ENCODE measurements at regions of chr2 and their contacts with region 1.

Region 1: DNA sequence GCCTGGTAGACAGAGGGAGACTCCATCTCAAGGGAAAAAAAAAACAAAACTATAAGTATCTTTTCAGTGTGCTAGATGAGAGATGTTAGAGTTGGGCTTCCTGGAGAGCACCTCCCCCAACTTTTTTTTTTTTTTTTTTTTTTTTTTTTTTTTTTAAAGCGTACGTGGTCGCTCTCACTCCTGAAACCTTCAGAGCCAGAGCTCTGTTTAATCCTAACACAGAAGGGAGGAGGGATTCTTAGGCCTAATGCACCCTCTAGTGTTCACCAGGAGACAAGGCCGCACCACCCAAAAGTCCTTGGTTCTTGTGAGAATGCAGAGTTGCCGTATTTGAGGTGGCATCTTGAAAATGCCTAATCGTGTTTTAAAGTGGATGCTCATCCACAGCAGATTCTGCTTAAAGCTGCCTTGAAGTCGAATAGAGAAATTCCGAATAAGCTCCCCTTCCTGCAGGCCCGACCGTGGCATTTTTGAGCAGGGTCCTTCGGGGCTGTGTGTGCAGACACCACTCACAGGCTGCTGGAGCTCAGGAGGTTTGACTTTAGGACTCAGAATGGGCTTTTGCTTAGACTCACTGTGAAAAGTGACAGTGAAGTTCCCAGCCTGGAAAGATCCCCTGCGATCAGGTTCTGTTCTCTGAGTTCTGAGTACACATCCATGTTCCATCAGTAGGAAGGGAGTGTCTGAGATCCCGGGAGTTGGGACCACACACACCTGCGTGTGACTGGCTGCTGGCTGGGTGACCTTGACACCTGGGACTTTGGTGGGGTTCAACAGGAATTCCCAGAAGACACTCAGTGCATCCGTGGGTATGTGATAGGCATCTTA is 252.6 kb downstream of the AGAP1 start:
- DNase-seq: peak in 3 of 5 donors; percentile 52 to 67 (median 55)
- ATAC-seq: peak; percentile 74 to 93 (median 88)
- H3K4me3 ChIP-seq: no peak overlapping the region
- H3K27ac ChIP-seq: no peak overlapping the region
- H3K4me1 ChIP-seq: peaks cover 0 to 10% (median 1%) of the 10 kb centered on the region in 12 donors
- H3K27me3 ChIP-seq: no peaks in the 10 kb centered on the region
- CTCF ChIP-seq: peak; percentile 65 to 84 (median 73)
- POLR2A ChIP-seq: no peak

Region 2: GRCh38 chr2:235135990-235136561 is 610.4 kb before region 1 on chr2:
- intact Hi-C with region 1: loop called (anchors 1 to 5 kb)
- DNase-seq: peak; percentile 71 to 87 (median 84)
- ATAC-seq: peak; percentile 73 to 96 (median 89)
- H3K4me3 ChIP-seq: no peak overlapping the region
- H3K27ac ChIP-seq: no peak overlapping the region
- H3K4me1 ChIP-seq: no peaks in the 10 kb centered on the region
- H3K27me3 ChIP-seq: no peaks in the 10 kb centered on the region
- CTCF ChIP-seq: peak; percentile 63 to 88 (median 74)
- POLR2A ChIP-seq: no peak

Region 3: GRCh38 chr2:235433860-235434259 is 312.6 kb before region 1 on chr2:
- intact Hi-C with region 1: loop called in 2 of 10 experiments (anchors 10 kb)
- DNase-seq: peak in 4 of 5 donors; percentile 66 to 84 (median 71)
- ATAC-seq: peak; percentile 82 to 96 (median 93)
- H3K4me3 ChIP-seq: no peak overlapping the region
- H3K27ac ChIP-seq: peak overlapping the region in 11 of 12 donors; percentile 56 to 79 (median 67)
- H3K4me1 ChIP-seq: peaks cover 0 to 22% (median 17%) of the 10 kb centered on the region in 12 donors
- H3K27me3 ChIP-seq: no peaks in the 10 kb centered on the region
- CTCF ChIP-seq: peak in 8 of 12 donors; percentile 10 to 42 (median 28)
- POLR2A ChIP-seq: no peak

Region 4: GRCh38 chr2:235595422-235596010 is 151.0 kb before region 1 on chr2:
- intact Hi-C with region 1: loop called (anchors 1 to 2 kb)
- DNase-seq: peak in 4 of 5 donors; percentile 60 to 73 (median 66)
- ATAC-seq: peak; percentile 21 to 74 (median 65)
- H3K4me3 ChIP-seq: no peak overlapping the region
- H3K27ac ChIP-seq: no peak overlapping the region
- H3K4me1 ChIP-seq: peaks cover 0 to 12% (median 2%) of the 10 kb centered on the region in 12 donors
- H3K27me3 ChIP-seq: no peaks in the 10 kb centered on the region
- CTCF ChIP-seq: peak; percentile 65 to 94 (median 85)
- POLR2A ChIP-seq: no peak

Region 5: GRCh38 chr2:235675678-235676535 is 70.6 kb before region 1 on chr2:
- intact Hi-C with region 1: loop called in 9 of 10 experiments (anchors 5 to 10 kb)
- DNase-seq: no peak
- ATAC-seq: no peak
- H3K4me3 ChIP-seq: no peak overlapping the region
- H3K27ac ChIP-seq: no peak overlapping the region
- H3K4me1 ChIP-seq: peaks cover 0 to 41% (median 19%) of the 10 kb centered on the region in 12 donors
- H3K27me3 ChIP-seq: peaks cover 0 to 16% (median 0%) of the 10 kb centered on the region in 9 donors
- CTCF ChIP-seq: no peak
- POLR2A ChIP-seq: no peak